Breast epithelium (tissue), 4 donors: ENCODE measurements at regions of chr12 and their contacts with region 1.

Region 1: GRCh38 chr12:70645494-70646317 is 8.5 kb upstream of the PTPRB start:
- DNase-seq: peak in 1 of 2 donors; percentile 24
- H3K4me3 ChIP-seq: no peak overlapping the region
- H3K27ac ChIP-seq: peak overlapping the region; percentile 19 to 21
- H3K4me1 ChIP-seq: no peaks in the 10 kb centered on the region
- H3K27me3 ChIP-seq: no peaks in the 10 kb centered on the region
- CTCF ChIP-seq: no peak
- POLR2A ChIP-seq: no peak

Region 2: GRCh38 chr12:70615174-70615866 is 30.4 kb before region 1 on chr12:
- intact Hi-C with region 1: no loop called
- DNase-seq: no peak
- H3K4me3 ChIP-seq: no peak overlapping the region
- H3K27ac ChIP-seq: no peak overlapping the region
- H3K4me1 ChIP-seq: no peaks in the 10 kb centered on the region
- H3K27me3 ChIP-seq: no peaks in the 10 kb centered on the region
- CTCF ChIP-seq: no peak
- POLR2A ChIP-seq: no peak

Region 3: DNA sequence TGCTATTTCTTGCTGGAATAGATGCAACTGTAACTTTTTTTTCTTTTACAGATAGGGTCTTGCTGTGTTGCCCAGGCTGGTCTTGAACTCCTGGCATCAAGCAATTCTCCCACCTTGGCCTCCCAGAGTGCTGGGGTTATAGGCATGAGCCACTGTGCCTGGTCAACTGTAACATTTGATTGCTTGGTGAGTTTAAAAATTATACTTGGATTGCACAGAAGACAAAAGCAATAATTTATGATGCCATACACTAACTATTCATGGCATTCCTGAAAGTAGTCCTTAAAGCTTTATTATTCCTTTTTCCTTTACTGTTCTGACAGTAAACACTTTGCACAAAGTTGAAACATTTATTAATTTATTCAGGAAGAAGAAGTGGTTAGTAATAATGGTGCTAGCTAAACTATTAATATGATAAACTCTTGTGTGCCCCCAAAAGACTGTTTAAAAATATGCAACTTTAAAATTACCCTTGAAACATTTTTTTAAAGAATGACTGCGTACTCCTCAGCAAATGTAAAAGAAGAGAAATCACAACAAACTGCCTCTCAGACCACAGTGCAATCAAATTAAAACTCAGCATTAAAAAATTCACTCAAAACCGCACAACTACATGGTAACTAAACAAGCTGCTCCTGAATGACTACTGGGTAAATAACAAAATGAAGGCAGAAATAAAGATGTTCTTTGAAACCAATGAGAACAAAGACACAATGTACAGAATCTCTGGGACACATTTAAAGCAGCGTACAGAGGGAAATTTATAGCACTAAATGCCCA is 16.8 kb before region 1 on chr12:
- intact Hi-C with region 1: loop called (anchors 2 kb)
- DNase-seq: no peak
- H3K4me3 ChIP-seq: no peak overlapping the region
- H3K27ac ChIP-seq: no peak overlapping the region
- H3K4me1 ChIP-seq: no peaks in the 10 kb centered on the region
- H3K27me3 ChIP-seq: no peaks in the 10 kb centered on the region
- CTCF ChIP-seq: no peak
- POLR2A ChIP-seq: no peak

Region 4: DNA sequence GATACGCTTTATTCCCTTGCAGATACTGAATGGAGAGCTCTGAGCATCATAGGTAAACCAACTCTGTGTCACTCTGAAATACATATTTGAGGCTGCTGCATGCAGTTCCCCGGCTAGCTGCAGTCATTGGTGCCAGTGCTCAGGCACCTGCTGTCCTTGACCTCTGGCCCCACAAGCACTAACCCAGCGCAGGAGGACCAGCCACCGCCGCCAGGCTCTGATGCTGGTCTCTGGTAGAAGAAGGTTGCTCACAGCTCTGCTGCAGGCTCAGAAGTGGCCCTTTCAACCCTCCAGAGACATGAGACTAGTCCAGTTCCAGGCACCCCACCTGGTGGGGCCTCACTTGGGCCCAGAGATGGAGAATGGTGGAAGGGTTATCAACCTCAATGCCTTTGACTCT is 26.0 kb after region 1 on chr12:
- intact Hi-C with region 1: no loop called
- DNase-seq: no peak
- H3K4me3 ChIP-seq: no peak overlapping the region
- H3K27ac ChIP-seq: no peak overlapping the region
- H3K4me1 ChIP-seq: no peaks in the 10 kb centered on the region
- H3K27me3 ChIP-seq: no peaks in the 10 kb centered on the region
- CTCF ChIP-seq: no peak
- POLR2A ChIP-seq: no peak